Activated T-helper 2 cell treated with anti-CD3 and anti-CD28 coated beads, Interferon-gamma antibody, Interleukin-2, Interleukin-4, amounts not matched to agents 10 μg/mL and 5 μg/mL and 100 μg/mL, durations not matched to agents 14 hours and 24 hours and 36 hours (primary cell): ENCODE measurements at regions of chr22 and their contacts with region 1.

Region 1: DNA sequence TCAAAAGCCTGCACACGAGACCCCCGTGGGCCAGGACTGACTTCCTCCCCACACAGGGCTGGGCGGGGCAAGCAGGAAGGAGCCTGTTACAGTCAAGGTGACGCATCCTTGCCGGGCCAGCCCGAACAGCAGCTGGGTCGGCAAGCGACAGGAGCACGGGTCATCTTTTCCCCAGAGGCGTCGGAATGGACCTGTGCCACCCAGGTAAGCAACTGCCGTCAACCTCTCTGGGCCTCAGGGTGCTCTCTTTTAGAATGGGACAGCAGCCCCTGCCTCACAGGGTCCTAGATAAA is at the start of gene CYTH4:
- DNase-seq: peak; percentile 71
- H3K4me3 Mint-ChIP-seq: peak within 1 kb of the TSS; percentile 87
- H3K27ac Mint-ChIP-seq: peak within 1 kb of the TSS; percentile 99
- H3K4me1 Mint-ChIP-seq: peaks cover 56% of the 10 kb centered on the region
- H3K27me3 Mint-ChIP-seq: no peaks in the 10 kb centered on the region
- total RNA-seq, gene CYTH4: 45.9 and 49.8 TPM in 2 replicates

Region 2: DNA sequence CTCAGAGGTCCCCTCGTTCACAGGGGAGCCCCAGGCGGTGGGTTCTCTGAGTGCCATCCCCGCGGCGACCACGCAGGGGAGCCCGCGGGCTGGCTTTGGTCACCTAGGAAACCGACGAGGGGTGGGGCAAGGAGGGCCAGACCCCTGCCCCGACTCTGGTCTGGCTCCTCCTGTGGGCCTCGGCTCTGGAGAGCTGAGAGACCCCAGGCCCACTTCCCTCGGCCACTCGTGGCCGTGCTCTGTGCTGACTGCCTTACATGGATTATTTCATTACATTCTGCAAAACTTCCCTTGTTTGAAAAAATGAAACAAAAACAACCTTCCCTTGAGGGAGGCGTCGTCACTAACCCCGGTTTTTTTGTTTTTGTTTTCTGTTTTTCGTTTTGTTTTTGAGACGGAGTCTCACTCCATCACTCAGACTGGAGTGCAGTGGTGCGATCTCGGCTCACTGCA is 15.2 kb before region 1 on chr22:
- intact Hi-C with region 1: loop called (anchors 2 kb)
- DNase-seq: peak; percentile 71
- H3K4me3 Mint-ChIP-seq: peak overlapping the region; percentile 80
- H3K27ac Mint-ChIP-seq: peak overlapping the region; percentile 87
- H3K4me1 Mint-ChIP-seq: peaks cover 39% of the 10 kb centered on the region
- H3K27me3 Mint-ChIP-seq: peaks cover 5% of the 10 kb centered on the region

Region 3: GRCh38 chr22:37303821-37304274 is 21.5 kb after region 1 on chr22:
- intact Hi-C with region 1: loop called (anchors 1 kb)
- DNase-seq: peak; percentile 26
- H3K4me3 Mint-ChIP-seq: peak overlapping the region; percentile 44
- H3K27ac Mint-ChIP-seq: peak overlapping the region; percentile 89
- H3K4me1 Mint-ChIP-seq: peaks cover 78% of the 10 kb centered on the region
- H3K27me3 Mint-ChIP-seq: no peaks in the 10 kb centered on the region